ENCODE measurements at regions of chr12 and their contacts with region 1.

Region 1: DNA sequence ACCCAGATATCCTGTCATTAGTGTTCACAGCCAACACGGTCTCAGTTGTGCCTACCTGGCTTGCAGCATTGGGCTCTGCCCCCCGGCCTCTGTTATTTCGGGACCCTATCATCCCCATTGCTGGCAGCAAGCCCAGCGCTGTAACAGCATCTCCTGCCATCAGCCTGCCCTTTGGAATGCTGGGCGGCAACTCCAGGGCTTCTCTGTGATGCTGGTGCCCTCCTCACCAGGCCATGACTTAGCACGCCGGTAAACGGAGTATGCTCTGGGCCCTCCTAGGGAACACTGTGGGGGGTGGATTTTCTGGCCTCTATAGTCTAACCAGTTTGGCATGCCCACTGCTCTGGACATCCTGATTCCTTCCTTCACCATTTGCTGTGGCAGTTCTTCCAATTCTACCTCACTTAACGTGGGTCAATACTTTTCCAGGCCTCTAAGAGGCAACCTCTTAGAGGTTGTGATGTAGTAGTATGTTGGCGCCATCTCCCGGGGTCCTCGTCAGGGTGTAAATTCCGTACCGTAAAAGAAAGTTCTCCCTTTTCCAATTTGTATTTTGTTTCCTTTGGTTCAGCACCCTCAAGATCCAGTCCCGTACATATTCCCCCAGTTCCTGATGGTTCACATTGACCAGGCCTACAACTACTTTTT is 80.0 kb downstream of the SINHCAF start:
- DNase-seq: no peak
- H3K4me3 Mint-ChIP-seq: no peak overlapping the region
- H3K27ac Mint-ChIP-seq: no peak overlapping the region
- H3K4me1 Mint-ChIP-seq: no peaks in the 10 kb centered on the region
- H3K27me3 Mint-ChIP-seq: peaks cover 9% of the 10 kb centered on the region

Region 2: GRCh38 chr12:31228811-31229792 is 16.8 kb before region 1 on chr12:
- intact Hi-C with region 1: no loop called
- DNase-seq: no peak
- H3K4me3 Mint-ChIP-seq: no peak overlapping the region
- H3K27ac Mint-ChIP-seq: no peak overlapping the region
- H3K4me1 Mint-ChIP-seq: no peaks in the 10 kb centered on the region
- H3K27me3 Mint-ChIP-seq: peaks cover 1% of the 10 kb centered on the region

Region 3: GRCh38 chr12:31631784-31632183 is 385.8 kb after region 1 on chr12:
- intact Hi-C with region 1: loop called (anchors 1 kb)
- DNase-seq: no peak
- H3K4me3 Mint-ChIP-seq: no peak overlapping the region
- H3K27ac Mint-ChIP-seq: no peak overlapping the region
- H3K4me1 Mint-ChIP-seq: no peaks in the 10 kb centered on the region
- H3K27me3 Mint-ChIP-seq: peaks cover 4% of the 10 kb centered on the region

Region 4: GRCh38 chr12:31672521-31672920 is 426.6 kb after region 1 on chr12:
- intact Hi-C with region 1: no loop called
- DNase-seq: no peak
- H3K4me3 Mint-ChIP-seq: no peak overlapping the region
- H3K27ac Mint-ChIP-seq: no peak overlapping the region
- H3K4me1 Mint-ChIP-seq: no peaks in the 10 kb centered on the region
- H3K27me3 Mint-ChIP-seq: no peaks in the 10 kb centered on the region

Measured in activated T-helper 1 cell treated with anti-CD3 and anti-CD28 coated beads, Interleukin-12 subunit alpha, Interleukin-12 subunit beta, Interleukin-2, Interleukin-4 antibody, amounts not matched to agents 30 ng/mL and 10 ng/mL and 1 ng/mL, durations not matched to agents 14 hours and 24 hours and 36 hours (primary cell).